AG04449 (cell line): ENCODE measurements at regions of chr11 and their contacts with region 1.

Region 1: GRCh38 chr11:86990515-86990914 is 35.3 kb upstream of the FZD4 start:
- DNase-seq: no peak
- H3K4me3 ChIP-seq: no peak overlapping the region
- CTCF ChIP-seq: no peak

Region 2: DNA sequence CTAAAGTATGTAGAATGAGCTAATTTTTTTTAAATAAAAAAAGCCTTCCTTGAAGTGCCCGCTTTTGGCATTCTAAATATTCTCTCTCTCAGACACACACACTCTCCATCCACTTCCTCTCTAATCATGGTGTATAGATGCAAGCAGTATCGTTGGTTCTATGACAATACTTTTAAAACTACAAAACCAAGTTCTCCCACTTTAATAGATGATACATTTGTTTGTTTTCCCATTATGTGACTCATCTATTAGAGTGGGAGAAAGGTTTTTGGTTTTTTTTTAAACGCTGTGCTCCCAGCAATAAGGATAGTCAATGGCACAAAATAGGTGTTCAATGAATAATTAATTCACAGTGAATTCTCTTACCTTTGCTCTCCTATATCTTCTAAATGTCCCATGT is 79.9 kb before region 1 on chr11:
- CTCF ChIA-PET with region 1: no interaction called
- POLR2A ChIA-PET with region 1: no interaction called
- DNase-seq: no peak
- H3K4me3 ChIP-seq: no peak overlapping the region
- CTCF ChIP-seq: no peak

Region 3: DNA sequence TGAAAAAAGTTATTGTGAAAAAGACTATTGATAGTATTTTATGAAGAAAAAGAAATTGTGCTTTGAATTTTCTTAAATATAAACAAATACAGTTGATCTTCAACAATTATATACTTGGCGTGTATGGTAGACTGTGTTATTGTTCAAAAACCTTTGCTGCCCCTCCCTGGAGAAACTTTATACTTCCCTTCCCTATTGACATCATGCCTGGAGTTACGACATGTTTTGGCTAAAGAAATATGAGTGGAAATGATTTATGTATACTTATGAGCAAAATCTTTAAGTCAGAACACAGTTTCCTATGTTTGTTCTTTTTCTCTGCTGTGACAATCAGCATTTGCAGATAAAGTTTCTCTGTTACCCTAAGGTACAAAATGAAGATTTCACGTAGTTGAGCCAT is 291.0 kb after region 1 on chr11:
- CTCF ChIA-PET with region 1: interaction called, 23 read pairs
- POLR2A ChIA-PET with region 1: no interaction called
- DNase-seq: no peak
- H3K4me3 ChIP-seq: no peak overlapping the region
- CTCF ChIP-seq: no peak